Activated CD4-positive, alpha-beta T cell treated with anti-CD3 and anti-CD28 coated beads for 36 hours (primary cell): ENCODE measurements at regions of chr1 and their contacts with region 1.

Region 1: DNA sequence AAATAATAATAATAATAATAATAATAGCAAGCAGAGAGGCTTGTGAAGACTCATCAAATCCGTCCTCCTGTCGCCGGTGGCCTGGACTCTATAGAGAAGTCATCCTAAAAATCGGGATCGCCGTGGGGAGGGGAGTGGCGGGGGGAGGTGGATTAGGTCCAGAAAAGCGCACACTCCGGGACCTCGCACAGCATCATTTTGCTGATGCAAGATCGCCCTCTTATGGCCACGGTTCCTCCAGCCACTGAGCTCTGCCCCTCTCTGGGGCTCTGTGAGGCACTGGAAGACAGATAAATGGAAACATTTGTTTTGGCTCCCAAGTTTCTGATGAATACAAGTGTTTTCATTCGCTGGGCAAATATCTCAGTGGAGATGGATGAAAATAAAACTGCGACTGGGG is 612.0 kb downstream of the MATN1 start:
- DNase-seq: peak; percentile 64
- ATAC-seq: peak; percentile 64
- H3K4me3 Mint-ChIP-seq: no peak overlapping the region
- H3K27ac Mint-ChIP-seq: no peak overlapping the region
- H3K4me1 Mint-ChIP-seq: no peaks in the 10 kb centered on the region
- H3K27me3 Mint-ChIP-seq: peaks cover 41% of the 10 kb centered on the region

Region 2: DNA sequence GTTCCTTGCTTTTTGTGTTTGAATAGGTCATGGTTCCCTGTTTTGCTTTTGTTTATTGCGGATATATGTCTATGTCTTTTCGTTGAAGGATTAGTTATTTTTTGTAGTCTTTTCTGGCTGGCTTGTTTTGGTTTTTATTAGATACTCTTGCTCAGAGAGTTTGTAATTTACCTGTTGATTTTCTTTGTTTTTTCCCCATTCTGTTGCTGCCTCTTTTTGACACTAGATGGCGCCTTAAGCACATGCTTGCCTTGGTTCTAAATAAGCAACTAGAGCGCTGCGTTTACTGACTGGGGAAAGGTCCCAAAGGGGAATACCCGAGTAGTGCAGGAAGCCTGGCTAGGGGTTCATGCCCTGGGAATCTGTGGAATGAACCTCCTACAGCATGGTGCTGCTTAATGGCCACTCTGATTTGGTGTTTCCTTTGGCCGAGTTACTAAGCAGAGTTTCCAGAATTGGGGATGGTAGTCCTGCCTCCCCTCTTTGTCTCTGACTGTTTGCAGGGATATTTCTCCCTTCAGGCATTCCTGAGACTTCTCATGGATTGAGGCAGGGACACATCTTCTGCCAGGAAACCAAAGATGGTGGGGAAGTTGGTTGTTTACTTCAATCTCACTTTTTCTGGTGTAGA is 731.9 kb before region 1 on chr1:
- CTCF ChIA-PET with region 1: interaction called, 4 read pairs
- POLR2A ChIA-PET with region 1: no interaction called
- intact Hi-C with region 1: loop called in 1 of 2 experiments (anchors 1 kb)
- DNase-seq: peak; percentile 24
- ATAC-seq: no peak
- H3K4me3 Mint-ChIP-seq: no peak overlapping the region
- H3K27ac Mint-ChIP-seq: no peak overlapping the region
- H3K4me1 Mint-ChIP-seq: no peaks in the 10 kb centered on the region
- H3K27me3 Mint-ChIP-seq: peaks cover 37% of the 10 kb centered on the region

Region 3: DNA sequence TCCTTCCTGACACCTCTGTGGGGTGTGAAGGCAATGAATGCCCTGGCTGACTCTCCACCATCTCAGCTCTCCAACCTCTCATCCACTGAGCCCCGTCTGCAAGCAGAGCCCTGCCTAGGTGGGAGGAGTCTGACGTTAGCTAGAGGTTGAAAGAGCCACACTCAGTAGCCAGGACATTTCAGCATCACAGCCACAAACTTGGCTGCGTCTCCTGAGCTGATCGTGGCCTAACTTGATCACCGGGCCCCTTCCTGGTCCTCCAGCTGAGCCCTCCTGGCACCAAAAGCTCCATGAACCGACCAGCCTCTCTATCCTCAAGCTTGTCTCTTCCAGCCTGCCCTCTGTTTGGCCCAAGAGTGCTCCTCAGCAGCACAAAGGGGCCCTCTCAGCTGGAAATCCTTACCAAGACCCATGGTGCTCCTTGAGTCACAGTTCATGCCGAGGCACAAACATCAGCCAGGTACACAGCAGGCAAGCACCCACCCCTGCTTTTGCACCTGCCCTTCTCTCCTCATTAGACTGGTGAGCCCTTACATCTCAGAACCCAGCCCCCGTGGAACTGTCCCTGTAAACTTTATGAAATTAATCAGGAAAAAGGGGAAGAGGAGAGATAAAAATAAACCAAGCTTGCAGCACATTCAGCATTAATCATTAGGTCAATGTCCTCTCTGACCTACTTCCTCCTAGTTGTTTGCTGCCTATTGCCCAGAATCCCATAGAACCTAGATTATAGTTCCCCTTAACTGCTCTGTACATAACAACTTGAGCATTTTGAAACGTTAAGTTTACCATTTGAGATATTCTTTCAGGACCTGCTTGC is 126.7 kb before region 1 on chr1:
- CTCF ChIA-PET with region 1: no interaction called
- POLR2A ChIA-PET with region 1: no interaction called
- intact Hi-C with region 1: no loop called
- DNase-seq: no peak
- ATAC-seq: no peak
- H3K4me3 Mint-ChIP-seq: no peak overlapping the region
- H3K27ac Mint-ChIP-seq: no peak overlapping the region
- H3K4me1 Mint-ChIP-seq: no peaks in the 10 kb centered on the region
- H3K27me3 Mint-ChIP-seq: peaks cover 16% of the 10 kb centered on the region